Activated T-helper 2 cell treated with anti-CD3 and anti-CD28 coated beads, Interferon-gamma antibody, Interleukin-2, Interleukin-4, amounts not matched to agents 10 μg/mL and 5 μg/mL and 100 μg/mL, durations not matched to agents 14 hours and 24 hours and 36 hours (primary cell): ENCODE measurements at regions of chr6 and their contacts with region 1.

Region 1: GRCh38 chr6:20919677-20920385 is 385.6 kb downstream of the CDKAL1 start:
- DNase-seq: no peak
- H3K4me3 Mint-ChIP-seq: no peak overlapping the region
- H3K27ac Mint-ChIP-seq: peak overlapping the region; percentile 54
- H3K4me1 Mint-ChIP-seq: peaks cover 22% of the 10 kb centered on the region
- H3K27me3 Mint-ChIP-seq: no peaks in the 10 kb centered on the region

Region 2: DNA sequence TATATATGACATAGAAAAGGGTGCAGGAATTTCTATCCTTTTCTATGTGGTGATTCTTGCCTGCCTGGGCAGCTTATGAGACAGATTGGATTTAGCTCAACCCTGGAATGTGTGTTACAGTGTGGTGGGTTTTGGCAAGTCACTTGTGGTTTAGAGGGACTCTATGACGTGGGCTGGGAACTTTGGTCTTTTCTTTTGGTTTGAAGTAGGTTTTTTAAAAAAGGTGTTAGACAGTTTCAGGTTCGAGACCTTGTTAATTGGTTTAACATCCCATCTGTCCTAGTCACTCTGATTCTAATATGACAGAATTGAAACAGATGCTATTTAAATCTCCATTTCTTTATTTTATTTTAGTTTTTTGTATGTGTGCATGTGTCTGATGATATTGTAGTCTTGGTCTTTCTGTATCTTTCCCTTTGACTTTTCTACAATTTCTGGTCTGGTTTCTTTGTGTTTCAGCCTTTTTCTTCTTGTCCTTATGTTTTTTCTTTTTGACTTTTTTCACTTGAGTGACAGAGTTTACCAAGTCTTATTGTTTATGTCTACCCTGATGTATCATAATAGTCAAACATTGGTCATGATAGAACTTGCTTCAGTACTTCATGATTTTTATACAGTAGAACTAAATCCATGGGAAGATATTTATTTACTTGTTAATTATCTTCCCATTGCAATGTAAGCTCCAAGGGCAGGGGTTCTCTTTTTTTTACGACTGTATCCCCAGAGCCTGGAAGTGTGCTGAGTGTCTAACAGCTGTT is 211.3 kb before region 1 on chr6:
- intact Hi-C with region 1: loop called (anchors 5 kb)
- DNase-seq: no peak
- H3K4me3 Mint-ChIP-seq: no peak overlapping the region
- H3K27ac Mint-ChIP-seq: peak overlapping the region; percentile 38
- H3K4me1 Mint-ChIP-seq: peaks cover 62% of the 10 kb centered on the region
- H3K27me3 Mint-ChIP-seq: no peaks in the 10 kb centered on the region

Region 3: GRCh38 chr6:21164768-21165326 is 245.0 kb after region 1 on chr6:
- intact Hi-C with region 1: loop called (anchors 5 kb)
- DNase-seq: no peak
- H3K4me3 Mint-ChIP-seq: no peak overlapping the region
- H3K27ac Mint-ChIP-seq: peak overlapping the region; percentile 44
- H3K4me1 Mint-ChIP-seq: peaks cover 34% of the 10 kb centered on the region
- H3K27me3 Mint-ChIP-seq: no peaks in the 10 kb centered on the region

Region 4: DNA sequence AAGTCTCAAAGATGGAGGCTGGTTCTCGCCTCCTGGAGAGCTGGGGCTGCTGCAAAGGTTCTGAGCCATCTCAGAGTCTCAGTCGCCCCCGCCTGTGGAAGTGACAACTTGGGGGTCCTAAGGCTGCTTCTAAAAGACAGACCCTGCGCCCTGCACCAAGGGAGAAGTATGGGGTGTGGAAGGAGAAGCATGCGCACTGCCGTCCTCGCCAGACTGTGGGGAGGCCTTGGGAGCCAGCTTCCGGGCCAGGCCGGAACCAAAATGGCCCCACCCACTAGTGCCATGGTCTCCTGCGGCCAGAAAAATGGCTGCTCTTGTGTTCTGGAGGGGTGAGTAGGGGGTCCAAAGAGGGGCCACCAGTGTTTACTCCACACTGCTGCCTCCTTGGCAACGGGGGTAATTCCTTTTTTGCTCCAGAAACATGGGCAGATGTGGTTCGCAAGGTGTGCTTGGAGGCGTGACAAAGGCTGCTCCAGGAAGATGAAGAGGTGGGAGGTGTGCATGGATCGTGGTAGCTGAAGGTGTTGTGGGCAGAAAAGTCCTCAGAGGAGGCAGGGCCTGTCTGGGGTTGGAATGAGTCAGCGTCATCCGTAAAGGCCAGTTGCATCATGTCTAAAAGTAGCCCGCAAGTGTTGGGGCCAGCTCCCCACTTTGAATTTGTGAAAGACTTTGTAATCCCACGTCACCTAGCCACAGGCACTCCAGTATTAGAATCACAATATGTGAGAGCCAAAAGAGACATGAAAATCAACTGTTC is 343.9 kb after region 1 on chr6:
- intact Hi-C with region 1: loop called (anchors 1 kb)
- DNase-seq: no peak
- H3K4me3 Mint-ChIP-seq: no peak overlapping the region
- H3K27ac Mint-ChIP-seq: no peak overlapping the region
- H3K4me1 Mint-ChIP-seq: peaks cover 26% of the 10 kb centered on the region
- H3K27me3 Mint-ChIP-seq: no peaks in the 10 kb centered on the region